Common myeloid progenitor, CD34-positive (primary cell): ENCODE measurements at regions of chr6 and their contacts with region 1.

Region 1: GRCh38 chr6:149746147-149746946 is at the start of gene NUP43:
- DNase-seq: peak; percentile 95 to 97 (median 96)
- H3K4me3 ChIP-seq: peak within 1 kb of the TSS; percentile 79 to 98 (median 94)
- H3K27ac ChIP-seq: peak within 1 kb of the TSS; percentile 64 to 87
- H3K4me1 ChIP-seq: peaks cover 8 to 33% (median 19%) of the 10 kb centered on the region in 4 experiments
- H3K27me3 ChIP-seq: no peaks in the 10 kb centered on the region

Region 2: DNA sequence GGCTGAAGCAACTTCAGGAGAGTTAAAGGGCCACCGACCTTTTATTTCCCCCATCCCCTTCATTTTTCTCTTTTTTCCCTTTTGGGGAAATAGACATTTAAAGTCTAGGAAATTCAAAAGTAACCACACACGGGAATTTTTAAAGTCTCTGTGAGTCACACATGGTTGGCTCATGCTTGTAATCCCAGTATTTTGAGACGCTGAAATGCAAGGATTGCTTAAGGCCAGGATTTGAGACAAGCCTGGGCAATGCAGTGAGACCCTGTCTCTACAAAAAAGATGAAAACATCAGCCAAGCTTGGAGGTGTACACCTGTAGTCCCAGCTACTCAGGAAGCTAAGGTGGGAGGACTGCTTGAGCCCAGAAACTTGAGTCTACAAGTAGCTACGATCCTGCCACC is 132.0 kb before region 1 on chr6:
- CTCF ChIA-PET with region 1: no interaction called
- POLR2A ChIA-PET with region 1: no interaction called
- DNase-seq: no peak
- H3K4me3 ChIP-seq: no peak overlapping the region
- H3K27ac ChIP-seq: no peak overlapping the region
- H3K4me1 ChIP-seq: no peaks in the 10 kb centered on the region
- H3K27me3 ChIP-seq: no peaks in the 10 kb centered on the region

Region 3: GRCh38 chr6:149723771-149724417 is 22.5 kb before region 1 on chr6:
- CTCF ChIA-PET with region 1: interaction called, 15 read pairs
- POLR2A ChIA-PET with region 1: no interaction called
- DNase-seq: peak; percentile 75 to 83 (median 83)
- H3K4me3 ChIP-seq: no peak overlapping the region
- H3K27ac ChIP-seq: no peak overlapping the region
- H3K4me1 ChIP-seq: peaks cover 5 to 30% (median 16%) of the 10 kb centered on the region in 4 experiments
- H3K27me3 ChIP-seq: no peaks in the 10 kb centered on the region